ENCODE measurements at regions of chr12 and their contacts with region 1.

Region 1: DNA sequence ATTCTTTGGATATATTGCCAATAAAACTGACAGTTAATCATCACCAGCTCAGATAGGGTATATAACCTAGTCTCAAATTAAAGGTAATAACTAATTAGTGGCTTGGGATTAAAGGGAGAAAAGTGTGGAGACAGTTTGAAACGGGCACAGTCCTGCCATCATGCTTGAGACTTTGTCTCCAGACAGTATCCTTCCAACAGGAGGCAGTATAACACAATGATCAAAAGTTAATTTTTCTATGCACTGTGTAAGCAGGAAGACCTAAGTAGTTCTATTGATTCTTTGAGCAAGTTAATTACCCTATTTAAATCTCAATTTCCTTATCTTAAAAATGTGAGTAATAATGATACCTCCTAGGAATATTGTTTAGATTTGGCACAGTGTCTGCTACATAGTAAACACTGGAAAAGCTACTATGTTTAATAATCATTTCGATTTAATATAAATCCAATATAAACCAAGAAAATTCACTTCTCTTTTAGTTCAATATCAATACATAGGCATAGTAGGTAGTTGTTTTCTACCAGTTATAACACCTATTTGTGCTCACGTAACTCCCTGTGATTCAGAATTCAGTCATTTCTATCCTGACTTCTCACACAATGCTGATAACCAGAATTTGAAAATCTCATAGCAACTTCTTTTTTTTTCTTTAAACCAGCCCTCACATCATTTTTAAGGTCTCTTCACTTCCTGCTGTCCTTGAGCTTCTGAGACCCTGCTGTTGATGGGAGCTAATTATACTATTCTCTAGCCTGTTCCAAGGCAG is 53.7 kb downstream of the GALNT4 start:
- DNase-seq: no peak
- ATAC-seq: peak in 6 of 8 donors; percentile 38 to 83 (median 72)
- H3K4me3 ChIP-seq: no peak overlapping the region
- H3K27ac ChIP-seq: no peak overlapping the region
- H3K4me1 ChIP-seq: peaks cover 0 to 17% (median 0%) of the 10 kb centered on the region in 9 donors
- H3K27me3 ChIP-seq: no peaks in the 10 kb centered on the region
- CTCF ChIP-seq: peak; percentile 28 to 79 (median 67)

Region 2: GRCh38 chr12:89288959-89289358 is 182.0 kb before region 1 on chr12:
- intact Hi-C with region 1: no loop called
- DNase-seq: no peak
- ATAC-seq: no peak
- H3K4me3 ChIP-seq: no peak overlapping the region
- H3K27ac ChIP-seq: no peak overlapping the region
- H3K4me1 ChIP-seq: no peaks in the 10 kb centered on the region
- H3K27me3 ChIP-seq: no peaks in the 10 kb centered on the region
- CTCF ChIP-seq: no peak

Region 3: DNA sequence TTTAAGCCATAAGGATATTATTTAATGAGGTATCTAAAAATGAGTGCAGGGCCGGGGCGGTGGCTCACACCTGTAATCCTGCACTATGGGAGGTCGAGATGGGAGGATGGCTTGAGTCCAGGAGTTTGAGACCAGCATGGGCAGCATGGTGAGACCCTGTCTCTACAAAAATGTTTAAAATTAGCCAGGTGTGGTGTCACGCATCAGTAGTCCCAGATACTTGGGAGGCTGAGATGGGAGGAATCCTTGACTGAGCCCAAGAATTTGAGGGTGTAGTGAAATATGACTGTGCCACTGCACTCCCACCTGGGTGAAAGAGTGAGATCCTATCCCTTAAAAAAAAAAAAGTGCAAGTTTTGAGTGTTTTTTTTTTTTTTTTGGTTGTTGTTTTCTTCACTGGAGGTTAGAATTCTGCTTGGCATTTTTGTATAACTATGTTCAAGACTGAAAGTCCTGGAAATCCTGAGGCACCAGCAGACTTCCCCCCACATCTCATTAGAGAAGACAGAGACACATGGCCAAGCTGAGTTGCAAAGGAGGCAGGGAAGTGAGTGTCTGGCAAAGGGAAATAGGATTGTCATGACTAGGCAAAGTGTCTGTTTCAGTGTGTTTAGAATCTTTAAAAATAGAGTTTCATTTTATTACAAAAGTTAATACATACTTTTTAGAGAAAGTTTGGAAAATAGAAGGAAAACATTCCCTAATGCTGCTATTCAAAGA is 65.1 kb before region 1 on chr12:
- intact Hi-C with region 1: no loop called
- DNase-seq: no peak
- ATAC-seq: no peak
- H3K4me3 ChIP-seq: no peak overlapping the region
- H3K27ac ChIP-seq: peak overlapping the region in 1 of 10 donors; percentile 20
- H3K4me1 ChIP-seq: peaks cover 0 to 9% (median 0%) of the 10 kb centered on the region in 9 donors
- H3K27me3 ChIP-seq: no peaks in the 10 kb centered on the region
- CTCF ChIP-seq: no peak

Region 4: DNA sequence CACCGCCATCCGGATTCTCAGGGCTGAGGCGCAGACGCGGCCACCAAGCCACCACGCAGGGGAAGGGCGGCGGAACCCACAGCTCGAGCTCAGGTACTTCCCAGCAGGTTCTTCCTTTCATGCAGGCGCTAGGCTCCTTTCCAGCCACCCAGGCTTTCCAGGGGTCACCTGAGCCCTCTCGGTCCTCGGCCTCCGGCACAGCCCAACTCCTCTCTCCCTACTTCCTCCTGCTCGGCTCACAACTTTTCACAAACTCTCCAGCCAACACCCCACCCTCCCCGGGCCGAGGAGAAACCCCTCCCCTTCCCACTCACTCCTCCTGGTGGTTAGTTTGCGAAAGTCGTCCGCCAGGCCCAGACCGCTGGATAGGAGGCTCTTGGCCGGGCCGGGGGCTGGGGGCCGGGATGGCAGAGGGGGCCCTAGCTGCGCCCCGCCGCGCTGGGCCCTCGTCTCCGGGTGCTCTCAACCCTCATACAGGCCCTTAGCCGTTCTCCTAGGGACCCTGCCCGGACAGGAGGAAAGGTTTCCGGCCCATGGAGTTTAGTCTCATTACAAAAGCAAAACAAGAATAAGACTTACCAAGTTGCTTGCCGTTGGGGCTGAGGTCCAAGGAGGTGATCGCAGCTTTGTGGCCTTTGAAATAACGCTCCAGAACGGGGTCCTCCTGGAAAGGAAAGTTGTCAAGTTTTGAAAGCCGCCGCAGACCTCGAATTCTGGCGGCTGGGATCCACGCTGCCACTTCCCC is 53.8 kb after region 1 on chr12 and contains the start of gene GALNT4:
- intact Hi-C with region 1: loop called in 9 of 10 experiments (anchors 1 to 10 kb)
- DNase-seq: peak; percentile 83 to 90
- ATAC-seq: peak; percentile 92 to 96 (median 94)
- H3K4me3 ChIP-seq: peak within 1 kb of the TSS; percentile 71 to 97 (median 92)
- H3K27ac ChIP-seq: peak within 1 kb of the TSS; percentile 82 to 95 (median 92)
- H3K4me1 ChIP-seq: peaks cover 2 to 55% (median 44%) of the 10 kb centered on the region in 9 donors
- H3K27me3 ChIP-seq: no peaks in the 10 kb centered on the region
- CTCF ChIP-seq: peak; percentile 54 to 81 (median 69)
- total RNA-seq, gene GALNT4: 1.4 to 3.8 (median 2.1) TPM

Region 5: GRCh38 chr12:89529738-89530137 is 58.8 kb after region 1 on chr12:
- intact Hi-C with region 1: loop called in 9 of 10 experiments (anchors 1 to 10 kb)
- DNase-seq: no peak
- ATAC-seq: no peak
- H3K4me3 ChIP-seq: no peak overlapping the region
- H3K27ac ChIP-seq: no peak overlapping the region
- H3K4me1 ChIP-seq: peaks cover 0 to 20% (median 12%) of the 10 kb centered on the region in 9 donors
- H3K27me3 ChIP-seq: no peaks in the 10 kb centered on the region
- CTCF ChIP-seq: peak; percentile 44 to 84 (median 72)